ENCODE measurements at regions of chr12 and their contacts with region 1.

Region 1: DNA sequence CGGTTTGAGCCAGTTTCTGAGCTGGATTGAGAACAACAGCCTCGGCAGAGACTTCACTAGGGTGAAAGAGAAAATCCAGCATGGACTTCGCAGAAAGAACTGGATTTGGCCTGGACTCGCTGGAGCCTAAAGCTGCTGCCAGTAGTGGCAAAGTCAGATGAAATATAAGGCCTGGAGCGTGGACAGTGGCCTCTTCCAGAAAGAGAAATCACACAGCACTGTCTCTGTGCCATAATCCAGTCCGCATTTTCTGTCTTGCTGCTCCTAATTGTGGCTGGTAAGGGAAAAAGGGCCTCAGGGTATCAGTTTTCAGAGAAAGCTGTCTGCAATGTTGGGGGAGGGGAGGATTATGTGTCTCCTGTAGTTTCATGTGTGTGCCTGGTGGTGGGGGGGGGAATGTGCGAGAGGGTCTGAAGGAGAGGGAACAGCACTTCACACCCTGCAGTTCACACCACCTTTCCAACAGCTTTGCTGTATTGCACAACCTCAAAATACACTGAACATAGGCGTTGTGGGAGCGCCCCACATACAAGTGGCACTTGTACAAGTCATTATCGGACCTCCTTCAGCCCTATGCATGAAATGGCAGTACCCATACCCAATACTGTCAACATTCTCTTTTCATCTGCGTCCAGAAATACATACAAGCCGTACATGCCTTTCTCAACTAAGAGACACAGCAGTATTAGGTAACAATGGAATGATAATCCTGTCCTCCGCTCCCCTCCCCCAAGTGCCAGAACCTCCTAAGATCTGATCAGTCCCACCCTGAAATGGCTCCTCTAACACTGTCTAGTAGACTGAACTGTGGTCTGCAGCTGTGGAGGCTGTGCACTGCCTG is 107.5 kb upstream of the ATF7IP start:
- DNase-seq: peak in 1 of 3 donors; percentile 92
- ATAC-seq: peak; percentile 87
- H3K4me3 ChIP-seq: no peak overlapping the region
- H3K27ac ChIP-seq: peak overlapping the region; percentile 90
- H3K4me1 ChIP-seq: peaks cover 9% of the 10 kb centered on the region
- H3K27me3 ChIP-seq: no peaks in the 10 kb centered on the region

Region 2: DNA sequence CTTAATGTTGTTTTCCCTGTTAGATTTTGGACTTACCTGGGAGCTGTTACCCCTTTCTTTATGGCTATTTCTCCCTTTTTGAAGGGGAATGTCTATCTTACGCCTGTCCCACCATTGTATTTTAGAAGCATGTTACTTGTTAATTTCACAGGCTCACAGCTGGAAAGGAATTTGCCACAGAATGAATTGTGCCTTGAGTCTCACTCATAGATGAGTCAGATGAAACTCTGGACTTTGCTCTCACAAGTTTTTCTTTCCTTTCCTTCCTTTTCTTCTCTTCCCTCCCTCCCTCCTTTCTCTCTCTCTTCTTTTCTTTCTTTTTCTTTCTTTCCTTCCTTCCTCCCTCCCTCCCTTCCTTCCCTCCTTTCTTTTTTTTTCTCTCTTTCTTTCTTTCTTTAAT is 98.2 kb after region 1 on chr12:
- intact Hi-C with region 1: loop called in 1 of 4 experiments (anchors 10 kb)
- DNase-seq: no peak
- ATAC-seq: no peak
- H3K4me3 ChIP-seq: no peak overlapping the region
- H3K27ac ChIP-seq: no peak overlapping the region
- H3K4me1 ChIP-seq: no peaks in the 10 kb centered on the region
- H3K27me3 ChIP-seq: no peaks in the 10 kb centered on the region

Region 3: DNA sequence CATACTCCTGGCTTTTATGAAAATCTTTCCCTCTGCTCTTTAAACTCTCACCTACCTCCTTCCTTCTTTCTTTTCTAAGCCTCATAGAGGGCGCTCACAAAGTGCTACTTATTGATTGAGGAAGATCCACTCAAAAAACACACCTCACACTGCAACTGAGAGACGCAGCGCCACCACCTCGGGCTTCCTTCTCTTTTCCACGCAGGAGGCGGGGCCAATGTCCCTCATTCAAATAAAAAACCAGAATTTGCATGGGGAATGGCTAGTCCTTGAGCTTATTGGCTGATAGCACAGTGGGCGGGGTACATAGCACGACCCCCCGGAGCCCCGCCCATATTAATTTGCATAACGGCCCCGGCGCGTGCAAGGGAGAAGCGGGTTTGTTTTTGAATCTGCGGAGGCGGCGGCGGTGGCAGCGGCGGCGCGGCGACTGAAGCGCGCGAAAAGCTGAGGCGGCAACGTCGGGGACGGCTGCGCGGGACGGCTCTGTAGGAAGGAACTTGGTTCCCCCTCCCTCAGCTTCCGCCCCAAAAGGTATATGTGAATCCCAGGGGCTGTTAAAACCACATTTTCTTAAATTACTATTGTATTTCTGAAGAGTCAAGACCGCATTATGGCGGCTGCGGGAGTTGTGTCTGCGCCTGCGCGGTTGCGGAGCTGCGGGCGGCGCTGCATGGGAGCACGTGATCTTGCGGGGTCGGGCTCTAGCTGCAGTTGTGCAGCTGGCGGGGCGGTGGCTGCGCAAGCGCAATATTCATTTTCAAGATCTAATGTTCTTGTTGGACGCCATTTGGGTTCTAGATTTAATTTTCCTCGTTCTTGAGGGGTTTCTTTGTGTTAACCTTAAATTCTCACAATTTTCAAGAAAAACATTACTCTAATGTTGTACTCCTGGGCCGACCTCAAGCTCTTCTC is 107.6 kb after region 1 on chr12 and contains the start of gene ATF7IP:
- intact Hi-C with region 1: loop called in 3 of 4 experiments (anchors 2 to 5 kb)
- DNase-seq: peak; percentile 97 to 98 (median 97)
- ATAC-seq: peak; percentile 99
- H3K4me3 ChIP-seq: peak within 1 kb of the TSS; percentile 80
- H3K27ac ChIP-seq: peak within 1 kb of the TSS; percentile 100
- H3K4me1 ChIP-seq: no peaks in the 10 kb centered on the region
- H3K27me3 ChIP-seq: no peaks in the 10 kb centered on the region
- total RNA-seq, gene ATF7IP: 61.4 to 77.7 (median 74.6) TPM

Region 4: DNA sequence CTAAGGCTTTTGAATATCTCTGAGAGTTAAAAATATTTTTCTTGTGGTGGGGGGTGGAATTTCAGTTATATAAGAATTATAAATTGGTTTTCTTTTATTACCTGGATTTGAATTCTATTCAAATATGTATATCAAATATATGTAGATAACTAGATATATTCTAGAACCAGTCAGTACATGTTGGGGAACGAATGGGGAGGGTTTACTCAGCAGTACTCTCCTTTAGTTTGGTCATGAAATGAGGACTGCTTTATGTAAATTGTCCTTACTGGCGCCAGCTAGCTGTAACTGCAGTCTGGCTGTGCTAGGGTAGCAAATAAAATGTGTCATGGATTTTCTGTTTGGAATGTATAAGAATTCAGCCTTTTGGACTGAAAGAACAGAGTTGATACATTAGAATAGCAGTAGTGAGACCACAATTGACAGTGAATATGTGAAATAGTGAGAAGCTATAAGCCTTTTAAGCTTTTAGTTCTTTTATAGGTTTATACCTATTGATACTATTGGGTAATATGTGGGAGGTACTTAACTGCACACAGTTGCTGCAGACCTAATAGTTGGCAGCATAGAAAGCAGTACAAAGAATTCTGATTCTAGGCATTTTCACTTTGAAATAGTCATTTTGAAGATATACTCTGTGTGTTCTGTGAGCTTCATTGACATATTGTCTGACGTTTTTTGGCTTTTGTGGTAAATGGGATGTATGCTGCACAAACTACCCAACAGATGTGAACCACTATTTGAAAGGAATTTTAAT is 136.5 kb after region 1 on chr12:
- intact Hi-C with region 1: loop called in 1 of 4 experiments (anchors 10 kb)
- DNase-seq: peak in 1 of 3 donors; percentile 40
- ATAC-seq: peak; percentile 93 to 94
- H3K4me3 ChIP-seq: peak overlapping the region; percentile 14
- H3K27ac ChIP-seq: no peak overlapping the region
- H3K4me1 ChIP-seq: peaks cover 1% of the 10 kb centered on the region
- H3K27me3 ChIP-seq: no peaks in the 10 kb centered on the region

Region 5: GRCh38 chr12:14601692-14602478 is 343.9 kb after region 1 on chr12:
- intact Hi-C with region 1: no loop called
- DNase-seq: no peak
- ATAC-seq: no peak
- H3K4me3 ChIP-seq: no peak overlapping the region
- H3K27ac ChIP-seq: no peak overlapping the region
- H3K4me1 ChIP-seq: no peaks in the 10 kb centered on the region
- H3K27me3 ChIP-seq: no peaks in the 10 kb centered on the region